PC-3 (cell line): ENCODE measurements at regions of chr14 and their contacts with region 1.

Region 1: DNA sequence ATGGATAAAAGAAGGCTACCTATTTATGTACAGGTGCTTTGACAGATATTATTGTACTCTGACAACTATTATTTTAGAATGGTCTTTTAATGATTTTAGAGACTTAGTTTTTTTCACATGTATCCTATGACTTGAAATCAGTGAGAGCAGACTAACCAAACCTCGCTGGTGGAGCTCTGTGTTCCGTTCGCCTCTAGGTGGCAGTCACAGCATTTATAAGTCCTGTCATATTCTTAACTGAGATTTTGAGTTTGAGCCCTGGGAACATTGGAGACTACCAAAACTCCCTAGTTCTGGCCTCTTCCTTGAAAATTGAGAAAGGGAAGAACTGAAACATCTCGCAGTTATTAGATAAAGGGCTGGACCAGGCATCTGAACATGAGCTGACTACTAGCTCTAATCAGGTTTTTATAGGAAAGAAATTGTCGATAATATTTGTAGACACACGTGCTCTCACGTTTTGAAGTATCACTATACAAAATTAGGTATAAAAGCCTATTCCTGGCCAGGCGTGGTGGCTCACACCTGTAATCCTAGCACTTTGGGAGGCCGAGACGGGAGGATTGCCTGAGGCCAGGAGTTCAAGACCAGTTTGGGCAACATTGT is 48.3 kb downstream of the TTLL5 start:
- DNase-seq: peak; percentile 80
- ATAC-seq: peak; percentile 26
- H3K4me3 ChIP-seq: no peak overlapping the region
- H3K27ac ChIP-seq: no peak overlapping the region
- H3K4me1 ChIP-seq: peaks cover 20% of the 10 kb centered on the region
- H3K27me3 ChIP-seq: no peaks in the 10 kb centered on the region
- CTCF ChIP-seq: peak; percentile 92

Region 2: DNA sequence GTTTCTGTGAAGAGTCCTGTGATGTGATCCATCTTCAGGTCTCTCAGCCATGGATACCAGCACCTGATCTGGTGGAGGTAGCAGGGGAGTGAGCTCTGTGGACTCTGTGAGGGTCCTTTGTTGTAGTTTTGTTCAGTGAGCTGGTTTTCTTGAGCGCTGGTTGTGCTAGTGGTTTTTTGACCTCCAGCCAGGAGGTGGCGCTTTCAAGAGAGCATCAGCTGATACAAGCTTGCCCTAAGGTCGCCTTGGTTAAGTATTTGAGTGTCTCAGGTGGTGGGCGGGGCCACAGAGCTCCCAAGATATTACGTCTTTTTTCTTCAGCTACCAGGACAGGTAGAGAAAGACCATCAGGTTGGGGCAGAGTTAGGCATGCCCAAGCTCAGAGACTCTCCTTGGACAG is 91.5 kb after region 1 on chr14:
- CTCF ChIA-PET with region 1: no interaction called
- POLR2A ChIA-PET with region 1: no interaction called
- intact Hi-C with region 1: no loop called
- DNase-seq: peak; percentile 34
- ATAC-seq: no peak
- H3K4me3 ChIP-seq: no peak overlapping the region
- H3K27ac ChIP-seq: no peak overlapping the region
- H3K4me1 ChIP-seq: no peaks in the 10 kb centered on the region
- H3K27me3 ChIP-seq: no peaks in the 10 kb centered on the region
- CTCF ChIP-seq: peak; percentile 64

Region 3: GRCh38 chr14:75822522-75823141 is 113.3 kb after region 1 on chr14:
- CTCF ChIA-PET with region 1: interaction called, 4 read pairs
- POLR2A ChIA-PET with region 1: no interaction called
- intact Hi-C with region 1: loop called (anchors 1 kb)
- DNase-seq: peak; percentile 81
- ATAC-seq: peak; percentile 80
- H3K4me3 ChIP-seq: no peak overlapping the region; the same call in 1 of the 2 replicates
- H3K27ac ChIP-seq: peak overlapping the region; percentile 97
- H3K4me1 ChIP-seq: peaks cover 52% of the 10 kb centered on the region
- H3K27me3 ChIP-seq: no peaks in the 10 kb centered on the region
- CTCF ChIP-seq: no peak

Region 4: DNA sequence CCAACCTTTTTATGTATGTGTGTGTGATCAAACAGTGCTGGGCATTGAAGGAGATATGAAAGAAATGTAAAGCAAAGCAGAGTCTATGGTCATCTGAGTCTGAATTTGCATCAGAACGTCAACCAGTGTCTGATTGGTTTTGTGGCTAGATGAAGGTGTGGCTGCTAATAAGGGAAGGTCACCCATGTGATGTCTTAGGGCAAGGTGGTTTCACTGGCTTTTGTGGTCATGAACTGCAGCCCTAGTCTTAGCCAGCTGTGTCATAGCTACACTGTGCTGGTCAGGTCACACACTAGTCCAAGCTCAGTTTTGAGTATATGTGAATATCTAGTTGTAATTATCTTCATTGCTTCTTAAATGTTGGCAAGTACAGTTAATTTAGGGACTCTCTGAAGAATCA is 166.6 kb after region 1 on chr14:
- CTCF ChIA-PET with region 1: no interaction called
- POLR2A ChIA-PET with region 1: no interaction called
- intact Hi-C with region 1: loop called (anchors 5 kb)
- DNase-seq: no peak
- ATAC-seq: no peak
- H3K4me3 ChIP-seq: no peak overlapping the region
- H3K27ac ChIP-seq: peak overlapping the region; percentile 96
- H3K4me1 ChIP-seq: peaks cover 43% of the 10 kb centered on the region
- H3K27me3 ChIP-seq: no peaks in the 10 kb centered on the region
- CTCF ChIP-seq: no peak

Region 5: DNA sequence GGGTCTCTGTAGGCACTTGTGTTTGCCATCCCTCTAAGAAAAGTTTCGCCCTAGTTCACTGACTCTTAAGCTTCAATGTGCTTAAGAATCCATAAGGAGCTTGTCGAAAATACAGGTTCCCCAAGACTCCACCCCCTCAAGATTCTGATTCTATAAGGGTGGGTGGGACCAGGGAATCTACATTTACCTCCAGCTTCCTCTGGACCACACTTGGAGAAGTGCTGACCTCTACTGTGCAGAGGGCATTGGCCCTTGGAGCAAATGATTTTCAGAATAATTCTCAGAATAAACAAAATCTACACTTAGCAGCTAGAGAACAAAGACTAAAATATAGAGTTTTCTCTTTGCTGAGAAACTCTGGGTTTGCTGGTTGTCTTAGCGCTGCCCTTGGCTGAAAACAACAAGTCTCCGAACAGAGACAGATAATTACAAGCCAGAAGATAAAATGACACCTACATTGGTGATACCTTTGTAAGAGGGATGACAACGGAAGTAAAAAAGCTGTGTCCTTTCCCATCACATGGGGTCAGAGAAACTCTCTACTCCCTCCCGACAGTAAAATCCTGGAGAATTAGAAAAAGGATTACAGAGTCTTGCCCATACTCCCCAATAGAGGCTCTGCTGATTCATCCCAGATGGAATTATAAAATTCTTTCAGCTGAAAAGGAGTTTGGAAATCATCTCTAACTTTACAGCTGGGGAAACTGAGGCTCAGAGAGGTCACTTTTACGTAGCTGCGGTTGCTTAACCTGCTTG is 267.7 kb after region 1 on chr14:
- CTCF ChIA-PET with region 1: interaction called, 34 read pairs
- POLR2A ChIA-PET with region 1: no interaction called
- intact Hi-C with region 1: loop called (anchors 1 kb)
- DNase-seq: no peak
- ATAC-seq: no peak
- H3K4me3 ChIP-seq: no peak overlapping the region
- H3K27ac ChIP-seq: no peak overlapping the region
- H3K4me1 ChIP-seq: peaks cover 26% of the 10 kb centered on the region
- H3K27me3 ChIP-seq: no peaks in the 10 kb centered on the region
- CTCF ChIP-seq: no peak

Region 6: DNA sequence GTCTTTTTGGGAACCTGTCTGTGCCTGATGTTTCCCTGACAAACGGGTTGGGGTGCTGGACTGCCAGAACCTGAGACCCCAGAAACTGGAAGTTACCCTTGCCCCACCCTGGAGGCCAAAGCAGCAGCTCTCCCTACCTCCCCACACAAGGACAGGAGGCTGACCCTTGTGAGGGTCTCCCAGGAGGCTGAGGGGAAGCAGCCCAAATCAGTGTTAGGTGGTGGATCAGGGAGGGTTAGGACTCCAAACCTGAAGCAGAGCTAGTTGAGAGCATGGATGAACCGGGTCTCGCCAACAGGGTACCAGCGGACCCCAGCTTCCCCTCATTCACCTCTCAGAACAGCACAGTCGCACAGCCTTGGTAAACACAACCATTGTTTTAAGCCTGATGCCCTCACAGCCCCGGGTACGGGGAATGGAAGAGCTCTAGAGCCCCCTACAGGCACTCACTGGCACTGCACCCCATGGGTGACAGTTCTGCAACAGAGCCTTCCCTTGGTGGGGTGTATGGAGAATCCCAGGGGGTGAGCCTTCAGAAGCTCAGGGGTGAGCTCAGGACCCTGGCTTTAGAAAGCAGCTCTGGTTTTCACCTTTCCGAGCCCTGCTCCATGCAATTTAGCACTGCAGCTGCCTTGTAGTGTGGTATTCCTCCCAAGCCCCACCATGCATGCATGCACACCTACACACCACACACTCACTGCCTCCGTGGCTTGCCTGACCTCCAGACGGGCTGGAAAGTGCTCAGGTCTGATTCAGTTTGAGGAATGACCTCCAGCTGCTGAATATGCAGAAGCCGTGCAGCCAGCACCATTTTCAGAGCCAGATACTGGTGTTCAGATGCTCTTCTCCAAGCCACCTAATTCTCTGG is 677.8 kb after region 1 on chr14:
- CTCF ChIA-PET with region 1: no interaction called
- POLR2A ChIA-PET with region 1: no interaction called
- intact Hi-C with region 1: loop called (anchors 1 kb)
- DNase-seq: peak; percentile 83
- ATAC-seq: peak; percentile 99
- H3K4me3 ChIP-seq: no peak overlapping the region
- H3K27ac ChIP-seq: no peak overlapping the region
- H3K4me1 ChIP-seq: no peaks in the 10 kb centered on the region
- H3K27me3 ChIP-seq: peaks cover 61% of the 10 kb centered on the region
- CTCF ChIP-seq: peak; percentile 97